Caco-2 (cell line): ENCODE measurements at regions of chr11 and their contacts with region 1.

Region 1: GRCh38 chr11:72413914-72414628 is 20.3 kb downstream of the CLPB start:
- DNase-seq: peak; percentile 87 to 89
- H3K4me3 ChIP-seq: no peak overlapping the region
- H3K4me3 Mint-ChIP-seq: no peak overlapping the region
- H3K27ac Mint-ChIP-seq: no peak overlapping the region
- H3K4me1 ChIP-seq: peaks cover 18% of the 10 kb centered on the region
- H3K4me1 Mint-ChIP-seq: peaks cover 6% of the 10 kb centered on the region
- H3K27me3 ChIP-seq: no peaks in the 10 kb centered on the region
- H3K27me3 Mint-ChIP-seq: no peaks in the 10 kb centered on the region
- CTCF ChIP-seq: peak; percentile 98 to 99

Region 2: GRCh38 chr11:72024069-72024754 is 389.9 kb before region 1 on chr11:
- CTCF ChIA-PET with region 1: interaction called, 19 read pairs
- POLR2A ChIA-PET with region 1: no interaction called
- intact Hi-C with region 1: loop called (anchors 1 kb)
- DNase-seq: no peak
- H3K4me3 ChIP-seq: no peak overlapping the region
- H3K4me3 Mint-ChIP-seq: no peak overlapping the region
- H3K27ac Mint-ChIP-seq: no peak overlapping the region
- H3K4me1 ChIP-seq: 0 out of 2 replicates have a peak, but pooled peaks cover 4% of the 10 kb centered on the region
- H3K4me1 Mint-ChIP-seq: peaks cover 8% of the 10 kb centered on the region
- H3K27me3 ChIP-seq: no peaks in the 10 kb centered on the region
- H3K27me3 Mint-ChIP-seq: no peaks in the 10 kb centered on the region
- CTCF ChIP-seq: no peak

Region 3: GRCh38 chr11:72091005-72091691 is 322.9 kb before region 1 on chr11:
- CTCF ChIA-PET with region 1: no interaction called
- POLR2A ChIA-PET with region 1: no interaction called
- intact Hi-C with region 1: loop called (anchors 5 kb)
- DNase-seq: peak; percentile 88 to 91
- H3K4me3 ChIP-seq: no peak overlapping the region
- H3K4me3 Mint-ChIP-seq: no peak overlapping the region
- H3K27ac Mint-ChIP-seq: no peak overlapping the region
- H3K4me1 ChIP-seq: peaks cover 6% of the 10 kb centered on the region
- H3K4me1 Mint-ChIP-seq: peaks cover 14% of the 10 kb centered on the region
- H3K27me3 ChIP-seq: no peaks in the 10 kb centered on the region
- H3K27me3 Mint-ChIP-seq: no peaks in the 10 kb centered on the region
- CTCF ChIP-seq: peak; percentile 97 to 99

Region 4: GRCh38 chr11:72222907-72223614 is 191.0 kb before region 1 on chr11:
- CTCF ChIA-PET with region 1: interaction called, 6 read pairs
- POLR2A ChIA-PET with region 1: no interaction called
- intact Hi-C with region 1: loop called (anchors 5 kb)
- DNase-seq: peak; percentile 98 to 99
- H3K4me3 ChIP-seq: peak overlapping the region; percentile 79
- H3K4me3 Mint-ChIP-seq: peak overlapping the region; percentile 99
- H3K27ac Mint-ChIP-seq: peak overlapping the region; percentile 72
- H3K4me1 ChIP-seq: peaks cover 28% of the 10 kb centered on the region
- H3K4me1 Mint-ChIP-seq: peaks cover 19% of the 10 kb centered on the region
- H3K27me3 ChIP-seq: no peaks in the 10 kb centered on the region
- H3K27me3 Mint-ChIP-seq: no peaks in the 10 kb centered on the region
- CTCF ChIP-seq: peak in 1 of 2 experiments; percentile 51

Region 5: DNA sequence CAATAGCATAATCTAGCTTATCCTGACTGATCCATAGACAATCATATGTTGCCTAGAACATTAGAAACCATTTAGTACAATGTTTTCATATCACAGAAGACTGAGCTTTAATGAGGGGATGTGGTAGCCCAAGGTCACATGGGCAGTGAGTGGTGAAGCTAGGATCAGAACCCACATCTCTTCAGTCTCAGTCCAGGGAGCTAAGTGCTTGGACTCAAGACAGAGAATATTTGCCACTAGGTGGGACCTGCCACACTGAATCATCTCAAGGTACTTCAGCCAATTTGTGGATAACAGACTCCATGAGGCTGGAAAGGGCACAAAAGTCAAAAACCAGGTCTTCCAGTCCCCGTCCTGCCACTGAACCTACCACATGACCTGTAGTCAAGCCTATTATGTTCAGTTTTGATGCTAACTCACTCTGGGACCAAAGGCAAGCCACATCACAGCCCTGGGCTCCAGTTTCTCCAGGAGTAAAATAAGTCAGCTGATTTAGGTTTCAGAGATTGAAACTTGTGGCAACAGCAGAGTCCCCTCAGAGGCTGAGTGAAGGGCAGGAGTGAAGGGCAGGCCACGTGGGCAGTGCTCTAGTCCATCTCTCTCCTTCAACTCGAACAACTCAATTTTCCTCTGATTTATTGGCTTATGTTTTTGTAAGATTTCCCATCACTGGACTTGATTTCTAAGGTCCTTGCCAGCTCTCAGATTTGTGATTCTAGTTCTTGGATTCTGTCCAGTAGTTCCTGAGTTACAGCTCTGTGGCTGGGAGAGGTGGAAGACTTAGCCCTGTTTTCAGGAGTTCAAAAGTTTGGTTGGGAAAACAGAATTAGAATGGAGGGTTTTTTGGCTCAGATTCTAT is 85.5 kb before region 1 on chr11:
- CTCF ChIA-PET with region 1: interaction called, 20 read pairs
- POLR2A ChIA-PET with region 1: no interaction called
- intact Hi-C with region 1: loop called (anchors 1 kb)
- DNase-seq: peak in 1 of 2 experiments; percentile 34
- H3K4me3 ChIP-seq: no peak overlapping the region
- H3K4me3 Mint-ChIP-seq: no peak overlapping the region
- H3K27ac Mint-ChIP-seq: no peak overlapping the region
- H3K4me1 ChIP-seq: no peaks in the 10 kb centered on the region
- H3K4me1 Mint-ChIP-seq: peaks cover 1% of the 10 kb centered on the region
- H3K27me3 ChIP-seq: no peaks in the 10 kb centered on the region
- H3K27me3 Mint-ChIP-seq: no peaks in the 10 kb centered on the region
- CTCF ChIP-seq: peak; percentile 45 to 46

Region 6: GRCh38 chr11:72358466-72359405 is 55.3 kb before region 1 on chr11:
- CTCF ChIA-PET with region 1: interaction called, 143 read pairs
- POLR2A ChIA-PET with region 1: interaction called, 3 read pairs
- intact Hi-C with region 1: loop called (anchors 1 kb)
- DNase-seq: no peak
- H3K4me3 ChIP-seq: no peak overlapping the region
- H3K4me3 Mint-ChIP-seq: no peak overlapping the region
- H3K27ac Mint-ChIP-seq: no peak overlapping the region
- H3K4me1 ChIP-seq: peaks cover 7% of the 10 kb centered on the region; the same call in 1 of the 2 replicates
- H3K4me1 Mint-ChIP-seq: peaks cover 15% of the 10 kb centered on the region
- H3K27me3 ChIP-seq: no peaks in the 10 kb centered on the region
- H3K27me3 Mint-ChIP-seq: no peaks in the 10 kb centered on the region
- CTCF ChIP-seq: no peak

Region 7: DNA sequence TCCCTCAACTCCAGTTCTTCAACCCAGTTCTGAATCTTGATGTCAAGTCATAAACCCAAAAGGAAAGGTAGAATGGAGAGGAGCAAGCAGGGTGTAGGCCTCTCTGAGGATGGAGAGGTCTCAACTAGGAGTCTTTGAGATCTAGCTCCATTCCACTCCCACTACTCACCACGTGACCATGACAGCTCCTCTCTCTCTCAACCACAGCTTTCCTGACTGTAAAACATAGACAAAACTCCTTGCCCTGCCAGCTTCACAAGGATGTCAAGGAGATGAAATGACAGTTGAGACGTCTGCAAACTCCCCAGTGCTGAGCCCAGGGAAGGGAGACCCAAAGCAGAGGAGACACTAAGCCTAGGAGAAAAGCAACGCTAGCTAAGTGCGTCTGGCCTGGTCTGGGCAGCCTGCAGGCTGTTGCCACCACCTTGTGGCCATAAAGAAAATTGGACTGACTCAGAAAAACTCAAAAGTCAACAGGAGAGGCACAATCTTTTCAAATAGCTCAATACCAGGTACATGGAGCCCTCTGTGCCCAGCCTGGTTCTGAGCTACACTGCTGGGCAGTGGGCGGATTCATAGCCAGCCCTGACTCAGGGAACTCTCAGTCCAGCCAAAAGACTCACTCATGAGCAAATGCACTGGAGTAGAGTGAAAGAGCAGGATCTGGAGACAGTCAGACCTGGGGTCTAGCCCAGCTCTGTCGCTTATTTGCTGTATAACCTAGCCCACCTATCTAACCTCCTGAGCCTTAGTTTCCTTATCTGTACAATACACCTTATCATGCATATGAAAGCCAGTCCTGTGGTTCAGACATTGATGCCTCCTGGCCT is 16.9 kb after region 1 on chr11:
- CTCF ChIA-PET with region 1: interaction called, 78 read pairs
- POLR2A ChIA-PET with region 1: no interaction called
- intact Hi-C with region 1: loop called (anchors 2 kb)
- DNase-seq: peak; percentile 63 to 68
- H3K4me3 ChIP-seq: no peak overlapping the region
- H3K4me3 Mint-ChIP-seq: no peak overlapping the region
- H3K27ac Mint-ChIP-seq: no peak overlapping the region
- H3K4me1 ChIP-seq: peaks cover 9% of the 10 kb centered on the region; the same call in 1 of the 2 replicates
- H3K4me1 Mint-ChIP-seq: peaks cover 18% of the 10 kb centered on the region
- H3K27me3 ChIP-seq: no peaks in the 10 kb centered on the region
- H3K27me3 Mint-ChIP-seq: no peaks in the 10 kb centered on the region
- CTCF ChIP-seq: peak; percentile 93 to 94

Region 8: DNA sequence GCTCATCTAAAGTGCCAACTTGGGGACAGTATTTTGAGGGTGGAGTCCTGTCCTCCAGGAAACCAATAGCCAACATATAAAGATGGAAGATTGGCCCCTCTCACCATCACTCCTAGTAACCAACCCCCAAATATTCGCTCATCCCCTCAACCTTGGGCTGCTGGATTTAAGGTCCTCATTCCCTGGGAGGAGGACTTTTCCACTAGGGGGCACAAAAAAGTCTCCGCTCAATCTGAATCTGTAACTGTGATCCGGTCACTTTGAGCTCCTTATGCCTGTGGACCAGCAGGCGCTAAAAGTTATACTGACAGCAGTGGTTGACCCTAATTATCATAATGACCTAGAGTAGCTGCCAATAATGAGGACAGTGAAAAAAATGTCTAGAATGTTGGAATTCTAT is 40.7 kb after region 1 on chr11:
- CTCF ChIA-PET with region 1: no interaction called
- POLR2A ChIA-PET with region 1: no interaction called
- intact Hi-C with region 1: no loop called
- DNase-seq: no peak
- H3K4me3 ChIP-seq: no peak overlapping the region
- H3K4me3 Mint-ChIP-seq: no peak overlapping the region
- H3K27ac Mint-ChIP-seq: no peak overlapping the region
- H3K4me1 ChIP-seq: no peaks in the 10 kb centered on the region
- H3K4me1 Mint-ChIP-seq: no peaks in the 10 kb centered on the region
- H3K27me3 ChIP-seq: no peaks in the 10 kb centered on the region
- H3K27me3 Mint-ChIP-seq: peaks cover 22% of the 10 kb centered on the region
- CTCF ChIP-seq: peak; percentile 34 to 53